ENCODE measurements at regions of chr1 and their contacts with region 1.

Region 1: GRCh38 chr1:219812491-219813203 is 115.7 kb downstream of the SLC30A10 start:
- DNase-seq: peak; percentile 85
- ATAC-seq: peak; percentile 99
- H3K4me3 ChIP-seq: no peak overlapping the region
- H3K27ac ChIP-seq: no peak overlapping the region
- H3K4me1 ChIP-seq: peaks cover 5% of the 10 kb centered on the region; the same call in 1 of the 2 replicates
- H3K27me3 ChIP-seq: peaks cover 1 to 4% of the 10 kb centered on the region in 2 experiments; a peak in 2 of 5 replicates
- CTCF ChIP-seq: peak; percentile 86
- EP300 ChIP-seq: no peak
- POLR2A ChIP-seq: no peak
- RAD21 ChIP-seq: peak; percentile 71; the same call in 1 of the 2 replicates

Region 2: DNA sequence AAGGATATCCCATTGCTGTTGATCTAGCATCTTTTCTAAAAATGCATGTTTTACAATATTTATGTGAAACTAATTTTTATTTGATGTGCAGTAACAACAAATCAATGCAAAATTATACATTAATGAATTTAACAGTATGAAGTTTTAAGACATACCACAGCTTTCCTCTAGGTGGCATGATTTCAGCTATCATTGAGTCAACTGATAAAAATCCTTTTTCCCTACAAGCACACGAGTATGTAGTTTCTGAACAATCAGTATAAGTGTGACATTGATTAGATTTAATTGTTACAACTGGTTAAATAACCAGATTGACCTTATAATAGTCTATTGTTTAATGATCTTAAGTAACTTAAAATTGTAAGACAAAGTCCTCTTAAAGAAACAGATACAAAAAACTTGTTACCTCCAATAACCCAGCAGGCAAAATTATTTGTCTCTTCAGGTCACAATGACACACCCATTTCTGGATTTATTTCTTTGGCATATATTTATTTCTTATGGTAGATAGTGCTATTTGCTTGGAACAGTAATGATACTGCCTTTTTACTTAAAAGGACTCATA is 1473.3 kb before region 1 on chr1:
- CTCF ChIA-PET with region 1: interaction called, 3 read pairs
- POLR2A ChIA-PET with region 1: no interaction called
- in situ Hi-C with region 1: loop called (anchors 10 kb)
- intact Hi-C with region 1: loop called (anchors 2 kb)
- DNase-seq: peak; percentile 19
- ATAC-seq: no peak
- H3K4me3 ChIP-seq: no peak overlapping the region
- H3K27ac ChIP-seq: no peak overlapping the region
- H3K4me1 ChIP-seq: peaks cover 7% of the 10 kb centered on the region
- H3K27me3 ChIP-seq: no peaks in the 10 kb centered on the region
- CTCF ChIP-seq: peak; percentile 58
- EP300 ChIP-seq: no peak
- POLR2A ChIP-seq: no peak
- RAD21 ChIP-seq: no peak

Region 3: DNA sequence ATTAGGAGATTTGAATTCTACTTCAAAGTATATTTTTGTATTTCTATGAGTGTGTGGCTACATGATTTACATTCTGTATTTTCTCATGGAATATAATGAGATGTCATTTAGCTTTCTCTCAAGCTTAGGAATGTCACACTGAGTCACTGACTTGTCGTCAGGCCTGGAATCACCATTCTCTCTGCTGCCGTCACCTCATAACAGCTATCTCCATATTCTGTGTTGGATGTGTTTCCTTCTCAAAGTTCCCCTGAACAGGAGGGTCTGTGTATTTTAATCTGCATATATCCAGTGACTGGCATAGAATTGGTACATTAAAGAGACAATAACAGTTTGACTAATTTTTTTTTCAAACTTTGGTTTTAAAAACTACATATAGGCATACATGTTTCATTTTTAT is 603.1 kb before region 1 on chr1:
- CTCF ChIA-PET with region 1: no interaction called
- POLR2A ChIA-PET with region 1: no interaction called
- in situ Hi-C with region 1: no loop called
- intact Hi-C with region 1: loop called (anchors 5 kb)
- DNase-seq: no peak
- ATAC-seq: no peak
- H3K4me3 ChIP-seq: no peak overlapping the region
- H3K27ac ChIP-seq: no peak overlapping the region
- H3K4me1 ChIP-seq: peaks cover 24% of the 10 kb centered on the region
- H3K27me3 ChIP-seq: no peaks in the 10 kb centered on the region
- CTCF ChIP-seq: no peak
- EP300 ChIP-seq: no peak
- POLR2A ChIP-seq: no peak
- RAD21 ChIP-seq: no peak

Region 4: DNA sequence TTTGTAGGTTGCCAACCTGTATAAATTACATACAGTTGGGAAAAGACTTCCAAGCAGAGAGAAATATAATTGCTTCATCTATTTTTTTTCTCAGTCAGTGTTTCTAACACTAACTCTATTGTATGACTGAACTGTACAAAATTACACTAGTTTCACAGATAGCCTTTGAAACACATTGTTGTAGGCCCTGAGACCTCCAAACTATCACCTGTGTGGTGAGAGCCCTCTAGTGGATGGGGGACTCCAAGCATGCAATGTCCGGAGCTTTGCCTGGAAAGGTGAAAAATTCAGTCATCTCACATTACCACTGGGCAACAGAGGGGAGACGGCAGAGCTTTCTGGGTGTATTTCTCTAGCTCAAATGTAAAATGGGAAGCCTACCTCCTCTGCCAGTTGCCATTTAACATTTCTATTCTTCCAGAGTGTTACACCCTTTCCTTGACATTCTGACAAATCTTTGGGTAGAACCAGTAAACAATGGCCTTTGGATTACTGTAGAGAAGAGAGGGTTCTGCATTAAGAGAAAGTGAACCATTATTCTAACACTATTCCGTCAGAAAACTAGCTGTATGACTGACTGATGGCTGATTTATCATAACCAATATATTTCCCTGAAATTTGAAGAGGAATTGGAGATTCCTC is 426.7 kb before region 1 on chr1:
- CTCF ChIA-PET with region 1: no interaction called
- POLR2A ChIA-PET with region 1: interaction called, 3 read pairs
- in situ Hi-C with region 1: no loop called
- intact Hi-C with region 1: loop called (anchors 1 kb)
- DNase-seq: peak; percentile 69
- ATAC-seq: peak; percentile 98
- H3K4me3 ChIP-seq: no peak overlapping the region
- H3K27ac ChIP-seq: no peak overlapping the region
- H3K4me1 ChIP-seq: peaks cover 32% of the 10 kb centered on the region
- H3K27me3 ChIP-seq: no peaks in the 10 kb centered on the region
- CTCF ChIP-seq: peak; percentile 89
- EP300 ChIP-seq: no peak
- POLR2A ChIP-seq: no peak
- RAD21 ChIP-seq: peak; percentile 88

Region 5: GRCh38 chr1:219566951-219567947 is 245.4 kb before region 1 on chr1:
- CTCF ChIA-PET with region 1: no interaction called
- POLR2A ChIA-PET with region 1: no interaction called
- in situ Hi-C with region 1: no loop called
- intact Hi-C with region 1: loop called (anchors 10 kb)
- DNase-seq: peak; percentile 20
- ATAC-seq: peak; percentile 57; the same call in 2 of the 3 replicates
- H3K4me3 ChIP-seq: no peak overlapping the region
- H3K27ac ChIP-seq: no peak overlapping the region
- H3K4me1 ChIP-seq: peaks cover 15% of the 10 kb centered on the region
- H3K27me3 ChIP-seq: no peaks in the 10 kb centered on the region; a peak in 1 of 5 replicates
- CTCF ChIP-seq: peak; percentile 64
- EP300 ChIP-seq: no peak
- POLR2A ChIP-seq: no peak
- RAD21 ChIP-seq: no peak

Region 6: DNA sequence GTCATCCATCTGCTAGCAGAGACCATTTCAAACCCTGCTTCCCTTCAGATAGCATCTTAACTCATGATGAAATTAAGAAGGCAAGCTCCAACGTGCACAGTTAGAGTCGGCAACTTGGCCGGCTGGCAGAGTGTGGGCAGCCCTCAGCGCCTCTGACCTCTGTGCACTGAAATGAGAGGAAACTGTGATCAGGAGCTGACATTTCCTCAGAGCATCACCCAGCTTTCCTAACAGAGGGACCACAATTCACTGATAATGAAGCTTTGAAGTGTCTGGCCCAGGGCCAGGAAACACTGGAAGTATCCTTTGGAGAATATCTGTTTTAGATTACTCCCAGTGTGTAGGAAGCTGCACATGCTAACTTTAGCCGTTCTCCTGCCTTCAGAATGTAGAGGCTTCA is 54.8 kb before region 1 on chr1:
- CTCF ChIA-PET with region 1: no interaction called
- POLR2A ChIA-PET with region 1: no interaction called
- in situ Hi-C with region 1: no loop called
- intact Hi-C with region 1: no loop called
- DNase-seq: no peak
- ATAC-seq: no peak
- H3K4me3 ChIP-seq: no peak overlapping the region
- H3K27ac ChIP-seq: no peak overlapping the region
- H3K4me1 ChIP-seq: no peaks in the 10 kb centered on the region
- H3K27me3 ChIP-seq: no peaks in the 10 kb centered on the region
- CTCF ChIP-seq: no peak
- EP300 ChIP-seq: no peak
- POLR2A ChIP-seq: no peak
- RAD21 ChIP-seq: no peak

Region 7: DNA sequence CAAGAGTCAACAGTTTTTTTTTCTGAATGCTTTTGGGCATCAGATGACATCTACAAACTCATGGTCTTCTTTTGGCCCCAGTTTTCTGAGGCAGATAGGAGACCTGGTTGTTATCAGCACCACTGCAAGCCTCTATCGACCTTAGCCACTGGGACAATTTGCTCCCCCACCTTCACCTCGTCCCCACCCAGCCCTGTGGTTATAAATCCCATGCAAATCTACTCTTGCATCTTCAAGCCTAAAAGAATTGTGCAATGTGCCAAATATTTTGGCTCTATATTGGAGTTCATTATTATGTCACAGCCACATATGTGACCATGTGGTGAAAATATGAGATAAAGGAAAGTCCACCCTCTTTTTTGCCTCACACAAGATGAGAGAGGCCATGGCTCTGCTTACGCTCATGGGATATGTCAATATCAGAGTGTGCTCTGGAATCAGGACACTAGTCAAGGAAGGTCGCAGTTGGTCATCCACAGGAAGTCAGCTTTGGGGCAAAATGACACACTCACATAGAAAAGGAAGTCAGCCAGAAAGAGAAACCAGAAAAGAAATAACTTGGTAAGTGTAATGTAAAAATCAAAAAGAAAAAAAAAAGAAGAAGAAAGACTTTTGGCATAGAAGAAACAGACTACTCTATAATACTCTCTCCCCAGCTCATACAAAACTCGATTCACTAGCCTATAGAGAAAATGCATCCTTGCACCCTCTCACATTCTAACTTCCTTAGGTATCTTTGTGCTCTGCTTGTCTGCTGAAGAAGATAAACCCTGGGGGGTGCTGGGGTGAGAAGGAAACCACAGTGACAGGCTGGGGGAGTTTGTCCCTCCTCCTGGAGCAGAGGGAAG is 94.5 kb after region 1 on chr1:
- CTCF ChIA-PET with region 1: no interaction called
- POLR2A ChIA-PET with region 1: no interaction called
- in situ Hi-C with region 1: no loop called
- intact Hi-C with region 1: no loop called
- DNase-seq: peak; percentile 2
- ATAC-seq: peak; percentile 80
- H3K4me3 ChIP-seq: no peak overlapping the region
- H3K27ac ChIP-seq: no peak overlapping the region
- H3K4me1 ChIP-seq: peaks cover 20% of the 10 kb centered on the region
- H3K27me3 ChIP-seq: no peaks in the 10 kb centered on the region; a peak in 1 of 5 replicates
- CTCF ChIP-seq: no peak
- EP300 ChIP-seq: no peak
- POLR2A ChIP-seq: no peak
- RAD21 ChIP-seq: no peak

Measured in HepG2 (cell line).